PC-3 (cell line): ENCODE measurements at regions of chr4 and their contacts with region 1.

Region 1: GRCh38 chr4:148954006-148954749 is 512.0 kb upstream of the NR3C2 start:
- DNase-seq: peak; percentile 76
- ATAC-seq: peak; percentile 81
- H3K4me3 ChIP-seq: no peak overlapping the region
- H3K27ac ChIP-seq: peak overlapping the region; percentile 73
- H3K4me1 ChIP-seq: peaks cover 26% of the 10 kb centered on the region
- H3K27me3 ChIP-seq: no peaks in the 10 kb centered on the region
- CTCF ChIP-seq: no peak

Region 2: DNA sequence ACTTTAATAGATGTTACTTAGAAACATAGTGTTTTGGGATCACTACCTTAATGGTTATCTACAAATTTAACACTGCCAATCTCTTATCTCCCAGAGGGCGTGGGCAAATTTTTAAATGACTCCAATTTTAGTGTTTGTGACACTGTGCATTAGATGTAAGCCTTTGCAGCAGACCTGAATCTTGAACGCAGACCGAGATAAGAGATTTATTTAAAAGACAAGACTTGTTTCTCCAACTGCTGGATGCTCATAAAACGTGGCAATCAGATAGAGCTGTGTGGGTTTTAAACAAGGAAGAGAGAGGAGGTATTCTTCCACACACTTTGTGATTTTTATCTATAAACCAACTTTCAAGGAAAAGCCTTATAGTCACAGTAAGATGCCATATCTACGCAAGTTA is 259.5 kb before region 1 on chr4:
- CTCF ChIA-PET with region 1: no interaction called
- POLR2A ChIA-PET with region 1: no interaction called
- intact Hi-C with region 1: no loop called
- DNase-seq: no peak
- ATAC-seq: no peak
- H3K4me3 ChIP-seq: no peak overlapping the region
- H3K27ac ChIP-seq: no peak overlapping the region
- H3K4me1 ChIP-seq: no peaks in the 10 kb centered on the region
- H3K27me3 ChIP-seq: no peaks in the 10 kb centered on the region
- CTCF ChIP-seq: no peak

Region 3: GRCh38 chr4:148986951-148987350 is 32.8 kb after region 1 on chr4:
- CTCF ChIA-PET with region 1: no interaction called
- POLR2A ChIA-PET with region 1: no interaction called
- intact Hi-C with region 1: loop called (anchors 2 kb)
- DNase-seq: peak; percentile 53
- ATAC-seq: peak; percentile 78
- H3K4me3 ChIP-seq: no peak overlapping the region
- H3K27ac ChIP-seq: no peak overlapping the region
- H3K4me1 ChIP-seq: peaks cover 8% of the 10 kb centered on the region
- H3K27me3 ChIP-seq: no peaks in the 10 kb centered on the region
- CTCF ChIP-seq: no peak

Region 4: DNA sequence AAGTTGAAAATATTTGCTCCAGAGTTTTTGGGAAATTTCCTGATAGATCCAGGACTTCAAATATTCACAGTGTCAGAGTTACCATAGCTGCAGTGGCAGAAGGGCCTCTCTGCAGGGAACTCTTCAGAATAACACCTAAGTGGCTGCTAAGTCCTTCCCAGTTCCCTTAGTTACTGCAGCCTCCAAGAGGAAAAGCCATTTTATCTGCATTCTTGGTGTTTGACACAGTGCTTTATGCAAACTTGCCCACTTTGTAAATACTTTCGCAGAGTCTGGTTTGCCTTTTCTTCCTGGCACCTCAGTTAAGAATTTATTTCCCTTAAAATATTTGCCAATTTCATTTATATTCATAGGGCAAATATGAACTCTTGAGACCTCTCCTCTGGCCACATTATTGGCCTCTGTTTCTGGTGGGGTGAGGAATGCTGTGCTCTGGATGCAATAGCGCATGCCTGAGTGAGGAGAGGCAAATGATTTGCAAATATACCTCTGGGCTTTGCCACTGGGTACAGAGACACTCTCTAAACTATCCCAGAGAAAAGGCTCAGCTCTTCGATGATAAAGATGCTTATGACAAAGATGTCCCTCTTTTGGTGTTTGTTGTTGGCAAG is 54.3 kb after region 1 on chr4:
- CTCF ChIA-PET with region 1: no interaction called
- POLR2A ChIA-PET with region 1: no interaction called
- intact Hi-C with region 1: no loop called
- DNase-seq: no peak
- ATAC-seq: no peak; the same call in 1 of the 2 replicates
- H3K4me3 ChIP-seq: no peak overlapping the region
- H3K27ac ChIP-seq: no peak overlapping the region
- H3K4me1 ChIP-seq: no peaks in the 10 kb centered on the region
- H3K27me3 ChIP-seq: no peaks in the 10 kb centered on the region
- CTCF ChIP-seq: no peak